ENCODE measurements at regions of chr5 and their contacts with region 1.

Region 1: DNA sequence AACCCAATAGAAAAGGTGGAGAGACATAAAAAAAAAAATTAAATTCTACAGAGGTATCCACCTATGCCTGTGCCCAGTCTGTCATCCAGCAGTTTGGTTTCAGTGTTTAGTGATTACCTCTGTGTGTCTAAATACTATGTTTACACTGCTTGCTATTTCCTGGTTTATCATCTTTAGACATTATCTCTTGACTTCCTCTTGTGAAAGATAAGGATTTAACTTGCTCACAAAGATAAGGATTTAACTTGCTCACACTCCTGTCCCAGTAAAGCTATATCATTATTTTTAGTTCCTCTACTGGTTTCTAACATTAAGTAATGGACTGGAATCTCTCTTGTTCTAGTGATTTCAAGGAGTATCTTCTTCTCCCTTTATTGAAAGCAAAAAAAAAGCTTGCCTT is 53.9 kb upstream of the ZFR start:
- DNase-seq: no peak
- H3K4me3 ChIP-seq: no peak overlapping the region
- H3K27ac ChIP-seq: no peak overlapping the region
- H3K4me1 ChIP-seq: no peaks in the 10 kb centered on the region
- H3K27me3 ChIP-seq: peaks cover 2% of the 10 kb centered on the region
- CTCF ChIP-seq: no peak

Region 2: DNA sequence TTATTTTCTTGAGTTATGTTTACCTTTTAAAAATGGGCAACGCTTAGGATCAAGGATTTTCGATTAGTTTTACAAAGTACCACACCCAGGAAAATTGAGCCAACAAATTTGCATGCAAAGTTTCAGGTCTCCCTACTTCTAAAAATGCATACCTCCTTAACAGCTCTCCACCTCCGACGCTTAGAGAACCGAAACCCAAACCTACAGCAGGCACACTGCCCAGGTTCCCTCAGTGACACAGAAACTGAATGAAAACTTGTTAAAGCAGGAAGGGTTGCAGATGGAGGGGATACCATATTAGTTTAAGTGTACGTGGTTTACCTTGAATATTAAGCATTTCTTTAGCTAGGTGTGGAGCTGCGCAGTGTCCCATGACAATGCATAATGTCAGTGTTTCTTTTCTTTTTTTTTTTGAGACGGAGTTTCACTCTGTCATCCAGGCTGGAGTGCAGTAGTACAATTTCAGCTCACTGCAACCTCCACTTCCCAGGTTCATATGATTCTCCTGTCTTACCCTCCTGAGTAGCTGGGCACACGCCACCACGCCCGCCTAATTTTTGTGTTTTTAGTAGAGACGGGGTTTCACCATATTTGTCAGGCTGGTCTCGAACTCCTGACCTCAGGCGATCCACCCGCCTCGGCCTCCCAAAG is 85.2 kb after region 1 on chr5:
- CTCF ChIA-PET with region 1: no interaction called
- dilution Hi-C with region 1: no loop called
- in situ Hi-C with region 1: no loop called
- intact Hi-C with region 1: no loop called
- DNase-seq: peak; percentile 8
- H3K4me3 ChIP-seq: no peak overlapping the region
- H3K27ac ChIP-seq: no peak overlapping the region
- H3K4me1 ChIP-seq: peaks cover 20% of the 10 kb centered on the region
- H3K27me3 ChIP-seq: no peaks in the 10 kb centered on the region
- CTCF ChIP-seq: no peak

Region 3: DNA sequence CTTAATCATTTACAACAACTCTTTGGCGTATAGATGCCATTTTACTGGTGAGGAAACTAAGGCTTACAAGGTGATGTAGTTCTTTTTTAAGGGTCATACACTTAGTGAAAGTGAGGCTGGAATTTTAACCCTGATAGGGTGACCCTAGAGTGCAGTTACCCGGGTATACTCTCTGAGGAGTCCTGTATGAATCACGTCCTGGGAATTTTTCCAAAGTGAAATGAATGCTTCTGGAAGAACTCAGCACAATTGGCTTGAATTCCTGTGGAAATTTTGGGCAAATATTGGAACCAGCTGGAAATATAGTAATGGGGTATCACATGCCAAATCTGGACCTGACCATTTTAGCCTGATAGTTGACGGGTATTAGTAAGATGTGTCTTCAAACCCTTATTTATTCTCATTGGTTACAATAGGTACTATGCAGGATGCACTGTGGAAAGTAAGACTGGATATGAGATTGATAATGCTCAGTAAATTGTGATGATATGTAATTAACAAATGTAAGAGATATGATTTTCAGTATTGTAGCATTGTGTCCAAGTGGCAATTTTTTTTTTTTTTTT is 101.7 kb after region 1 on chr5:
- CTCF ChIA-PET with region 1: no interaction called
- dilution Hi-C with region 1: loop called (anchors 5 kb)
- in situ Hi-C with region 1: no loop called
- intact Hi-C with region 1: no loop called
- DNase-seq: peak; percentile 25
- H3K4me3 ChIP-seq: no peak overlapping the region
- H3K27ac ChIP-seq: no peak overlapping the region
- H3K4me1 ChIP-seq: peaks cover 7% of the 10 kb centered on the region
- H3K27me3 ChIP-seq: no peaks in the 10 kb centered on the region
- CTCF ChIP-seq: no peak